Colonic mucosa (tissue), 4 donors: ENCODE measurements at regions of chr16 and their contacts with region 1.

Region 1: DNA sequence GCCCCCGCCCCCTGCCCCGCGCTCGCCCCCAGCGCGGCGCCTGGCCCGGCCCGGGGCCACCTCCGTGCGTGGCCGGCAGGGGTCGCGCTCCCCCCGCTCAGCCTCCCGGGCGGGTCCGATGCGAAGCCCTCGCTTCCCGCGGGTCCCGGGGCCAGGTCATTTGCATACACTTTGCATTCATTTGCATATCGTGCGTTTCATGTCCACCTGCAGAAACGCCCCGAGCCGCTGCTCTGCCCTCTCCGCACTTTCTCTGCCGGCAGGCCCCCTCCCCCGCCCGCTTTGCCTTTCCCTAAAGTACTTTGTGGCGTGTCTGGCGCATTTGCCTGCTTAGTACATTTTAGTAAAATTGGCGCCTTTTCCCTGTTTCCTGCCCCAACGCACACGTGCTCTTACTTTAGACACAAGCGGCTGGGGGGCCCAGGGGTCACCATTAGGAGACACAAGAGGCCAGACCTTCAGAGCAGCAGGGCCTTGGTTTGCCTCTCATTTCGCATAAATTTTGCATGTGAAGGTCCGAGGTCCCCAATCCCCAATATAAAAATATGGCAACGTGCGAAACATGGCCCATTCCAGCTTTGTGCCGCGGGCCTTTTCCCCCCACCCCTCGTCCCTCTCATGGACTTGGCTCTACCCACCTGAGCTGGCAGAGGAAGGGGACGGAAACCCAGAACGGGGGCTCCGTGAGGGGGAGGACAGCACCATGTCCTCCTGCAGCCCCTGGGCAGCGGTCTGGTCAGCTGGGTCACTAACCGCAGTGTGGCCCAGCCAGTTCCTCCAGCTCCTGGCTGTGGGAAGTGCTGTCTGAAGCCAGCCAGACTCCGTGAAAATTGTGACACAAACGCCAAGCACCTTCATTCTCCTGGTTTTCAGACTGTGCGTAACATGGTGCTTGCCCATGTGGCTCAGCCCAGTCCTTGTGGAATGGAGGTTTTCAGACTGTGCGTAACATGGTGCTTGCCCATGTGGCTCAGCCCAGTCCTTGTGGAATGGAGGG is 34.8 kb downstream of the CBFA2T3 start:
- DNase-seq: peak; percentile 47
- H3K4me3 ChIP-seq: peak overlapping the region; percentile 17
- H3K27ac ChIP-seq: no peak overlapping the region
- H3K4me1 ChIP-seq: peaks cover under 1% of the 10 kb centered on the region
- H3K27me3 ChIP-seq: peaks cover 26% of the 10 kb centered on the region
- CTCF ChIP-seq: peak; percentile 38

Region 2: GRCh38 chr16:88747588-88748301 is 194.5 kb before region 1 on chr16:
- intact Hi-C with region 1: no loop called
- DNase-seq: peak; percentile 63
- H3K4me3 ChIP-seq: no peak overlapping the region
- H3K27ac ChIP-seq: no peak overlapping the region
- H3K4me1 ChIP-seq: peaks cover 9% of the 10 kb centered on the region
- H3K27me3 ChIP-seq: no peaks in the 10 kb centered on the region
- CTCF ChIP-seq: peak; percentile 47

Region 3: DNA sequence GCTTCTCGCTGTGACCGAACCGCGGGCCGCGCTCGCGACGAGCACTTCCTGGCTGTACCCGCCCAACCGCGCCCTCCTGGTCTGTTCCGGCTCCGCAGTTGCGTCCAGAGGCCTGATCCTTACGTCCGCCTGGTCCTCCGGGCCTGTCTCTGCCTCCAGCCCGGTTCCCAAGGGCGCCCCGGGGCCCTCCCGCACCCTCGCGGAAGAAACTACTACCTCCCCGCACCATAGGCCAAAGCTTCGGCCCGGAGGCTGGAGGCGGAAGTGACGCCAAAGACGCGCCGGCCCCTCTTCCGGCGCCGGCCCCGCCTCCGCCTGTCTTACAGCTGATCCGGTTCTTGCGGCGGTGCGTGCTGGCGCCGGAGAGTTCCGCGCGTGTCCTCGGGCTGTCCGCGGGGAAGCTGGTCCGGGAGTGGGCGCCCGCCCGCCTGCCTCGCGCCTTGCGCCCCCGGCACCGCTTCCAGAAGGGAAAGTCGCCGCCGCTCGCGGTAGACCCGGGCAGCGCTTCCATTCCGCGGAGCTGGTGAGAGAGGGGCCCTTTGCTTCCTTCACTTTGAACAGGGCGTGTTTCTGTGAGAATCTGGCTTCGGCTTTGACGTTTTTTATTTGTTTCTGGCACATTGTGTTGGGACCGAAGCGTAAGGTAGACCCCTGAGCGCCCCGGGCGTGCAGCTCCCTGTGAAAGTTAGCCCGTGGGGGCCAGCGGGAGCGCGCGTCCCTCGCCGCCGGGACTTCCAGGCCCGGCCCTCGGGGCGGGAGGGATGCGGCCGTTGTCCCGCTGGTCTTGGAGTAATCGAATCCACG is 275.4 kb after region 1 on chr16 and contains the start of gene ZNF778:
- intact Hi-C with region 1: loop called (anchors 5 kb)
- DNase-seq: peak; percentile 86
- H3K4me3 ChIP-seq: peak within 1 kb of the TSS; percentile 87
- H3K27ac ChIP-seq: peak within 1 kb of the TSS; percentile 92
- H3K4me1 ChIP-seq: peaks cover 3% of the 10 kb centered on the region
- H3K27me3 ChIP-seq: no peaks in the 10 kb centered on the region
- CTCF ChIP-seq: no peak
- total RNA-seq, gene ZNF778: 3.9 to 6.4 TPM